ENCODE measurements at regions of chr2 and their contacts with region 1.

Region 1: DNA sequence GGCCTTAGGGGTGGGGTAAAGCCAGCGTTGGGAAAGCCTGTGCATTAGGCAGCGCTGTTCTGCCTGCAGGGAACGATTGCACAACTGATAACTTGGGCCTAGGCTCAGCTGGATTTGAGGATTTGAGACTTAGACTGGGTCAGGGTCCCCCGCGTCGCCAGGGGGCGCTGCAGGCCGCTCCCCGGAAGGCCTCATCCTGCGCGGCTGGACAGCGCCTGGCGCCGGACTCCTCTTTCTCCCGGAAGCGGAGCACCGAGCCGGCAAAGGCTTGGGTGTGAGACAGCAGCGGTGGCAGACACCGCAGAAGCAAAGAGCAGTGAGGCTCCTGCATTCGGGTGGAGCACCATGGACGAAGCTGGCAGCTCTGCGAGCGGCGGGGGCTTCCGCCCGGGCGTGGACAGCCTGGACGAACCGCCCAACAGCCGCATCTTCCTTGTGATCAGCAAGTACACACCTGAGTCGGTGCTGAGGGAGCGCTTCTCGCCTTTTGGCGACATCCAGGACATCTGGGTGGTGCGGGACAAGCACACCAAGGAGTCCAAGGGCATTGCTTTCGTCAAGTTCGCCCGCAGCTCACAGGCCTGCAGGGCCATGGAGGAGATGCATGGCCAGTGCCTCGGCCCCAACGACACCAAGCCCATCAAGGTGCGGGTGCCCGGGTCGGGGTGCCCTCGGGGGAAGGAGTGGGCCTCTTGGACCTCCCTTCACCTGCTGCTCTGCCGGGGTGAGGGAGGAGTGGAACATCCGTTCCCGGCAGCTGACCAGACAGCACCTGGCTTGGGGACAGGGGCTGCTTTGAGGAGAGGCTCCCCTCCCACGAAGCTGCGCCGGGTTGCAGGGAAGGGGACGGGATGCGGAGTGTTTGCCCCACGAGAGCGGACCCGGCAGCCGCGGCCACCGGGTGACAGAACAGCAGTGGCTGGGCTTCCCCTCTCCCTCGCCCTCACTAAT is at the start of gene RBM45:
- DNase-seq: peak; percentile 92
- ATAC-seq: peak; percentile 98
- H3K4me3 ChIP-seq: peak within 1 kb of the TSS; percentile 65 to 95 (median 87)
- H3K27ac ChIP-seq: peak within 1 kb of the TSS; percentile 68
- H3K4me1 ChIP-seq: peaks cover 15% of the 10 kb centered on the region
- H3K27me3 ChIP-seq: no peaks in the 10 kb centered on the region
- CTCF ChIP-seq: peak; percentile 99
- EP300 ChIP-seq: peak; percentile 40 to 66; a peak in 1 of 4 replicates
- POLR2A ChIP-seq: peak; percentile 97
- RAD21 ChIP-seq: peak; percentile 78
- total RNA-seq, gene RBM45: 25.2 and 30.4 TPM in 2 replicates

Region 2: GRCh38 chr2:177983183-177983788 is 129.2 kb before region 1 on chr2:
- CTCF ChIA-PET with region 1: no interaction called
- POLR2A ChIA-PET with region 1: no interaction called
- in situ Hi-C with region 1: no loop called
- intact Hi-C with region 1: loop called (anchors 5 kb)
- DNase-seq: peak; percentile 53
- ATAC-seq: peak; percentile 90
- H3K4me3 ChIP-seq: no peak overlapping the region
- H3K27ac ChIP-seq: no peak overlapping the region
- H3K4me1 ChIP-seq: no peaks in the 10 kb centered on the region
- H3K27me3 ChIP-seq: no peaks in the 10 kb centered on the region
- CTCF ChIP-seq: peak; percentile 80
- EP300 ChIP-seq: no peak
- POLR2A ChIP-seq: no peak
- RAD21 ChIP-seq: peak; percentile 67

Region 3: GRCh38 chr2:178043266-178043665 is 69.2 kb before region 1 on chr2:
- CTCF ChIA-PET with region 1: no interaction called
- POLR2A ChIA-PET with region 1: no interaction called
- in situ Hi-C with region 1: no loop called
- intact Hi-C with region 1: no loop called
- DNase-seq: no peak
- ATAC-seq: no peak
- H3K4me3 ChIP-seq: no peak overlapping the region
- H3K27ac ChIP-seq: no peak overlapping the region
- H3K4me1 ChIP-seq: no peaks in the 10 kb centered on the region
- H3K27me3 ChIP-seq: no peaks in the 10 kb centered on the region
- CTCF ChIP-seq: no peak
- EP300 ChIP-seq: no peak
- POLR2A ChIP-seq: no peak
- RAD21 ChIP-seq: no peak

Region 4: DNA sequence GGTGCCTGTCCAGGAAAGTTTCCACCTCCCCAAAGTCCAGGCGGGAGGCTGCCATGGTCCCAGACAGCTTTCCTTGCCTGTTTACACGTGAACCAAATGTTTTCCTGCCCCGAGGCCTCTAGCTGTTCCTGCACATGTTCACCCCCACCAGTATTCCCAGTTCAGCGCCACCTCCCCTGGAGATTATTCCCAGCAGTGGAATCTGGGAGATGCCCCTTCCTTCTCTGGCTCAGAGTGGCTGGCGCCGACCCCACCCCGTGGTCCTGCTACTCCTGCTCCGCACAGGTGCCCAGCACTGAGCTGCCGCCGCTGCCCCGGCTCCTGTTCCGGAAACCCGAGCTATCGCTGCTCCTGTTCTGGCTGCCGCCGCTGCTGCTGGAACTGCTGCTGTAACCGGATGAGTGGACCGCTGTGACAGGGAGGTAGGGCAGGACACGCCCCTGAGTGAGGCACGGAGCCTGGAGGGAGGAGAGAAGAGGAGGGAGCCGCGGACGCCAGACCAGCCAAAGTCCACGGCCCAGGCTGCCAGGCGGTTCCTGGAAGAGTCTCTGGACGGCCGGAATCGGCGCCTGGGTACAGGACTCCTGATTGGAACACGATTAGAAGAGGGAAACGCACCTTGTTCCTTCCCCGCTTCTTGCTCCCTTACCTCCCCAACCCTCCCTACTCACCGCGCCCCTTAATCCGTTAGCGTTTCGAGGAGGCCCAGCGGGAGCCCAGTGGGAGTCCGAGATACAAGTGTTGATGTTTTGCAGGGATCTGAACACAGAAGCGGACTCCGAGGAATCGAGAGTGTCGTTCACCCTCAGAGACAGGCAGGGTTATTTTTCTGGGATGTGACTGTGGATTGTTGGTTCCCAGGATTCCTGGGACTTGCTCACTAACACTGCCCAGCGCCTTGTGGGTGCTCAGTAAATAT is 39.8 kb before region 1 on chr2 and contains the start of gene PDE11A:
- CTCF ChIA-PET with region 1: no interaction called
- POLR2A ChIA-PET with region 1: interaction called, 3 read pairs
- in situ Hi-C with region 1: no loop called
- intact Hi-C with region 1: loop called (anchors 2 kb)
- DNase-seq: peak; percentile 88
- ATAC-seq: peak; percentile 99
- H3K4me3 ChIP-seq: peak within 1 kb of the TSS; percentile 67 to 77 (median 76)
- H3K27ac ChIP-seq: peak within 1 kb of the TSS; percentile 27
- H3K4me1 ChIP-seq: peaks cover 44% of the 10 kb centered on the region
- H3K27me3 ChIP-seq: peaks cover 0 to 6% of the 10 kb centered on the region in 2 experiments; a peak in 1 of 5 replicates
- CTCF ChIP-seq: no peak; the same call in none of the 2 replicates
- EP300 ChIP-seq: peak; percentile 36 to 67; a peak in 3 of 4 replicates
- POLR2A ChIP-seq: peak; percentile 92 to 95
- RAD21 ChIP-seq: no peak; the same call in 1 of the 2 replicates
- total RNA-seq, gene PDE11A: 1.2 and 1.4 TPM in 2 replicates

Region 5: GRCh38 chr2:178084273-178084672 is 28.2 kb before region 1 on chr2:
- CTCF ChIA-PET with region 1: no interaction called
- POLR2A ChIA-PET with region 1: no interaction called
- in situ Hi-C with region 1: no loop called
- intact Hi-C with region 1: no loop called
- DNase-seq: no peak
- ATAC-seq: no peak
- H3K4me3 ChIP-seq: no peak overlapping the region
- H3K27ac ChIP-seq: no peak overlapping the region
- H3K4me1 ChIP-seq: no peaks in the 10 kb centered on the region
- H3K27me3 ChIP-seq: no peaks in the 10 kb centered on the region
- CTCF ChIP-seq: no peak
- EP300 ChIP-seq: no peak
- POLR2A ChIP-seq: no peak
- RAD21 ChIP-seq: no peak

Region 6: GRCh38 chr2:178193823-178194599 is 81.5 kb after region 1 on chr2 and contains the start of gene OSBPL6:
- CTCF ChIA-PET with region 1: no interaction called
- POLR2A ChIA-PET with region 1: no interaction called
- in situ Hi-C with region 1: no loop called
- intact Hi-C with region 1: loop called (anchors 5 kb)
- DNase-seq: peak; percentile 28
- ATAC-seq: peak; percentile 93
- H3K4me3 ChIP-seq: peak within 1 kb of the TSS; percentile 59 to 78 (median 66)
- H3K27ac ChIP-seq: no peak within 1 kb of the TSS
- H3K4me1 ChIP-seq: peaks cover 22% of the 10 kb centered on the region
- H3K27me3 ChIP-seq: peaks cover 8 to 73% of the 10 kb centered on the region in 2 experiments
- CTCF ChIP-seq: peak; percentile 25; the same call in 1 of the 2 replicates
- EP300 ChIP-seq: no peak
- POLR2A ChIP-seq: no peak
- RAD21 ChIP-seq: peak; percentile 40
- total RNA-seq, gene OSBPL6: 0.10 and 0.11 TPM in 2 replicates

Region 7: DNA sequence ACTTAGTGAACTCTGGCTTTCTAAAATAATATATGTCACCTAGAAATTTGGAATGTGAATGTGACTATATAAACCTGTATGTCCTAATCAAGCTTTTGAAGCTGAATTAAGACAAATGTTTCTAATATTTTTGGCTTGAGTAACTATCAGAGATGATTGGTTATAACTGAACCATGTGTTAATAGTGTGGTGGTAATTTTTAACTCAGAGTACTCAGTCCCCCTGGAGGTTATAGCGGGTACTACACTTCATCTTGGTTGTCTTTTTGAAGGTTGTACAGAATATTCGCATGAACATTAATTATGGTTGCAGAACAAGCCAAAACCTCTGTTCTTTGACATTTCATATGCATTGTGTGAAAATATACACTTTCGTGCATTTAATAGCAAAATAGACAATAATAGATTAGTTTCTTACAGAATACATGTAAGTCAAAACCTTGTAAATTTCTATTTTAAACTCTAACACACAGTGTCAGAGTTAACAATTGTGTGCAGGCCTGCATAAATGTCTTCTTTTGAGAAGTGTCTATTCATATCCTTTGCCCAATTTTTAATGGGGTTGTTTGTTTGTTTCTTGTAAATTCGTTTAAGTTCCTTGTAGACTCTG is 167.9 kb after region 1 on chr2:
- CTCF ChIA-PET with region 1: interaction called, 9 read pairs
- POLR2A ChIA-PET with region 1: no interaction called
- in situ Hi-C with region 1: no loop called
- intact Hi-C with region 1: loop called (anchors 1 kb)
- DNase-seq: peak; percentile 53
- ATAC-seq: peak; percentile 19; the same call in 1 of the 3 replicates
- H3K4me3 ChIP-seq: no peak overlapping the region
- H3K27ac ChIP-seq: no peak overlapping the region
- H3K4me1 ChIP-seq: peaks cover 30% of the 10 kb centered on the region
- H3K27me3 ChIP-seq: no peaks in the 10 kb centered on the region
- CTCF ChIP-seq: peak; percentile 65
- EP300 ChIP-seq: no peak
- POLR2A ChIP-seq: no peak
- RAD21 ChIP-seq: no peak

Region 8: GRCh38 chr2:178397002-178397605 is 284.6 kb after region 1 on chr2:
- CTCF ChIA-PET with region 1: no interaction called
- POLR2A ChIA-PET with region 1: no interaction called
- in situ Hi-C with region 1: no loop called
- intact Hi-C with region 1: loop called (anchors 5 kb)
- DNase-seq: peak; percentile 46
- ATAC-seq: peak; percentile 84
- H3K4me3 ChIP-seq: no peak overlapping the region
- H3K27ac ChIP-seq: no peak overlapping the region
- H3K4me1 ChIP-seq: no peaks in the 10 kb centered on the region
- H3K27me3 ChIP-seq: no peaks in the 10 kb centered on the region
- CTCF ChIP-seq: peak; percentile 68
- EP300 ChIP-seq: no peak
- POLR2A ChIP-seq: no peak
- RAD21 ChIP-seq: no peak

Measured in HepG2 (cell line).